ENCODE measurements at regions of chrX and their contacts with region 1.

Region 1: DNA sequence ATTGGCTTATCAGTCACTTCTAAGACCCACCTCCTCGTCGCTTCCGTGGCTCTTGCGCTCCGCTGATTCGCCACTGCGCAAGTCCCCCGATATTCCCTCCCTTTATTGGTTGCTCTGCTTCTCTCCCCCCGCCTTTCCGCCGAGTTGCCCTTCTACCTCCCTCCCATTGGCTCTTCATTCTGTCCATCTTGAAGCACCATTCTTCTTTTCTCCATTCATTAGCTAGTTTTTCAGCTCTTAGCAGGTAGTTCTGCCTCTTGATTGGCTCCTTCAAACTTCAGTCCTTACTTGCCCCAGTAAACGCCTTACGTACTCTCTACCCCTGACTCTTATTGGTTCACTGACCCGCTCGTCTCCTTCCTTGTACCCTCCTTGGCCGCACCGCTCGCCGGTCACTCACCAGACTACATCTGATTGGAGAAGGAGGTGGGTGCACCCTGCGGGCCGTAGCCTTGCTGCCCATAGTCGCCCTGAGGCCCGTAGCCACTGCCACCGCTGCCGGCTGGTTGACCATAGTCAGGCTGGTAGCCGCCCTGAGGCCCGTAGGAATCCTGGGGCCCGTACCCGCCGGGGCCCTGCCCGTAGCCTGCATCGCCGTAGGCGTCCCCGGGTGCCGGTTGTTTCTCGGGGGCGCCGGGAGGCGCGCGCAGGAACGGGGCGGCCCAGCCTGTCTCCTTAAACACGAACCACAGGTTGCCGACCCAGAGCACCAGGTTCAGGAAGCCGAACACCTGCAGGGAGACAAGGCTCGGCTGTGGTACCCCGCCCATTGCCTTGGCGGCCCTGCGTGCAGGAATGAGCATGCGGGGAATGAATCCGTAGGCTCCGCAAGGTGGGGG is 5.1 kb upstream of the PRICKLE3 start:
- DNase-seq: peak; percentile 87
- CTCF ChIP-seq: no peak

Region 2: DNA sequence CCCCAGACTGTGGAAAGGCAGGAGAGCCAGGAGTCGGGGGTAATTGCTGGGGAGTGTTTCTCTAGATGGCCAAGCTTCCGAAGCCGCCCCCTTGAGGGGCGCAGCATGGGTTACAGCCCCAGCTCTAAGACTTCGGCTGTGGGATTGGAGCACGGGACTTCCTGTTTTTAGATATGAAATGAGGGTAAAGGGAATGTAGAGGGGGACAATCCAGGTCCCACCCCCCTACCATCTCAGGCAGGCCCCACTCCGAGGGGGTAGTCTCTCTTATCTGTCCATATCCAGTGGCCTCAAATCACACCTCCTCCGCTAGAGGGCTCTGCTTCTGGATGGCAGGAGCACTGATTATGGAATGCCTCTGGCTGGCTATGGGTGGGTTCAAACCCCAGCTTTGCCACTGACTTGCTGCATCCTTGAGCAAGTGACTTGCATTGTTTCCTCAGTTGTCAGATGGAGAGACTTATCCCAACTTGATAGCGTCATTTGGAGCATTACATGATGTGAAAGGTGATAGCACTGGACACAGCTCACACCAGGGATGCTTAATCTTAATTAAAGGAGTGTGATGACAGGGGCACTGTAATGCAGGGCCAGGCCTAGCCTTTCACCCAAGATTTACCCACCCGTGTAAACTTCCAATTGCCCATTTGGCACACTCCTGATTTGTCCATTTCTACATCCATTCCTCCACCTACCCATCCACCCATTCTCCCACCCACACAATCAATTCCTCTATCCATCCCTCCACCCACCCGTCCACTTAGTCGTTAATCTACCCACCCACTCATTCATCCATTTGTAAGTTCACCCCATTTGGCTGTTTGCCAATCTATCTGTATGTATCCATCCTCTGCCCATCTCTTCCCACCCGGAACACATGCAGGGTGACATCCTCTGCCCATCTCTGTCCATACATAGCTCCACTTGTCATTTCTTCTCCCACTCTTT is 218.8 kb before region 1 on chrX:
- CTCF ChIA-PET with region 1: no interaction called
- POLR2A ChIA-PET with region 1: no interaction called
- DNase-seq: peak; percentile 40
- CTCF ChIP-seq: peak; percentile 51

Region 3: DNA sequence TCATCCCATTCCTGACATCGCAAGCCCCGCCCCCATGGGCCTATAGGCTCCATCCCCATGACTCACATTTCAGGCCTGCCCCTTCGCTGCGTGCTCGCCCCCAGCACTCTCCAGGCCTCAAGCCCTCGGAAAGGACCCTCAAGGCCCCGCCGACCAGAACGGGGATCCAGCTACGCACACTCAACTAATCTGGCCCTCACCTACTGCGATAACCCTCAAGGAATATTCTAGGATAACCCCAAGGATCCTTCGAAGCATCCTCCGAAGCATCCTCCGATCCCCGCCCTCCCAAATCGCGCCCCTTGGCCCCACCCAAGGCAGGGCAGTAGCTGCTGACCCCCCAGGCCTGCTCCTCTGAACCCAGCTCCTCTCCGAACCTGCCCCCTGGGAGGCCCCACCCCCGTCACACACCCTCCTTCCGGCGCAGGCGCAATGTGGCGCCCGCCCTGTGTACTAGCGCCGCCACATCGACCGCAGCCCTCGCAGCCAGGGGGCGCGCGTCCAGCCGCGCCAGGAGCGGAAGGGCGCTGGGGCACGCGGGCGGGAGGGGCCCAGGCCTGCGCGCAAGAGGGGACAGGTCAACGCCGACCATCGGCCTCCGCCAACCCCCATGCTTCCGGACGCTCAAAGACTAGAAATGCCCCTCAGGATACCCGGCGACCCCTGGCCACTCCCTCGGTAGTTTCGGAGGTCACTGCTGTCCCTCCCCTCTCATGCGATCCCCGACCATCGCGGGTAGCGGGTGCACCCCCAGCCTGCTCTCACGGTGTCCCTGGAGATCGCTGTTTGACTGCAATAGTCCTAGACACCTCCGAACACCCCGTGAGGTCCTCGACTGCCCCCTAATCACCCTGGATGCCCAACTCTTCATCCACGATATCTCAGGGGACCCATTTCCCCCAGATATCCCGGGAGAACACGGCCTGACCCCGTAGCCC is 35.1 kb before region 1 on chrX:
- CTCF ChIA-PET with region 1: interaction called, 11 read pairs
- POLR2A ChIA-PET with region 1: no interaction called
- DNase-seq: peak; percentile 85
- CTCF ChIP-seq: peak; percentile 74

Region 4: DNA sequence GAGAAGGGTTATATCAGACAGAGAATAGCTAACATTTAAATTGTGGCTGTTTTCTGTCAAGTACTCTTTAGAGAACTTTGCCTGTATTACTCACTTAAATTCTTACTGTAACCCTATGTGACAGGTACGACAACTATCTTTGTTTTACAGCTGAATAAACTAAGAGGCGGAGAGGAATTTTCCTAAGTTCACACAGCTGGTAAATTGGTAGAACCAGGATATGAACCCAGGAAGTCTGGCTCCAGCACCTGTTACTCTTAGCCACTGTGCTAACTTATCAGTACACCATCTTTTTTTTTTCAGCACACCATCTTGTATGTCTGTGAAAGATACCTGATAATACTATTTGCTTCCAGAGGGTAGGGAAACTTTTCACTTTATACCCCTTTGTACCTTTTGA is 10.8 kb after region 1 on chrX:
- CTCF ChIA-PET with region 1: interaction called, 11 read pairs
- POLR2A ChIA-PET with region 1: no interaction called
- DNase-seq: no peak
- CTCF ChIP-seq: no peak

Region 5: DNA sequence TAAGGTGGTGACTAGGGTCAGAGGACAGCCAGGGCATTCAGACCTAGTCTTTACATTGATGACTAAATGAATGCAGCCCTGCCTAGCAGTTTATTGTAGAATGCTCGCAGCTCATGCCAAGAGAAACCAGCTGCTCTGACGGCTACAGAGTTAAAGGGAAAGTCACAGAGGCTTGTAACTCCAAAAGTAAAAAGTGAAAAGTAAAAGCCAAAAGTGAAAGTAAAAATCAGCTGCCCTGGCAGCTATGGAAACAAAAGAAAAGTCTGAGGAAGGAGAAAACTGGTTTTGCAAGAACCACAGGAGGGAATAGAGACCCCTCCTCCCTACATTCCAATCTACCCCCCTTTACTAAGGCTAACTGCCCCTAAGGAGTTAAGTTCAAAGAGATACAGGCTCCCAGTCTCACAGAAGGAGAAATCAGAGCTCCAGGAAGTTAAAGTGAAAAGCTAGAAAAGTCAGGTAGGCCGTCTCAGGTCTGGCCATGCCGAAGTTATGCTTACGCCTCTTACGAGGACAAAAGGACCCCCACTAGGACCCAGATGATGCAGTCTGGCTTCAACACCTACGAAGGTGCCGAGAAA is 118.2 kb after region 1 on chrX:
- CTCF ChIA-PET with region 1: no interaction called
- POLR2A ChIA-PET with region 1: no interaction called
- DNase-seq: no peak
- CTCF ChIP-seq: no peak

Measured in GM10248 (cell line).